ENCODE measurements at regions of chr11 and their contacts with region 1.

Region 1: GRCh38 chr11:113730887-113731726 is 25.0 kb upstream of the TMPRSS5 start:
- DNase-seq: peak; percentile 5 to 49
- ATAC-seq: peak; percentile 72 to 78; a peak in 4 of 6 replicates
- H3K4me3 ChIP-seq: no peak overlapping the region
- H3K27ac ChIP-seq: no peak overlapping the region
- H3K4me1 ChIP-seq: no peaks in the 10 kb centered on the region
- CTCF ChIP-seq: peak; percentile 58
- EP300 ChIP-seq: no peak
- POLR2A ChIP-seq: no peak
- RAD21 ChIP-seq: peak; percentile 70 to 77

Region 2: DNA sequence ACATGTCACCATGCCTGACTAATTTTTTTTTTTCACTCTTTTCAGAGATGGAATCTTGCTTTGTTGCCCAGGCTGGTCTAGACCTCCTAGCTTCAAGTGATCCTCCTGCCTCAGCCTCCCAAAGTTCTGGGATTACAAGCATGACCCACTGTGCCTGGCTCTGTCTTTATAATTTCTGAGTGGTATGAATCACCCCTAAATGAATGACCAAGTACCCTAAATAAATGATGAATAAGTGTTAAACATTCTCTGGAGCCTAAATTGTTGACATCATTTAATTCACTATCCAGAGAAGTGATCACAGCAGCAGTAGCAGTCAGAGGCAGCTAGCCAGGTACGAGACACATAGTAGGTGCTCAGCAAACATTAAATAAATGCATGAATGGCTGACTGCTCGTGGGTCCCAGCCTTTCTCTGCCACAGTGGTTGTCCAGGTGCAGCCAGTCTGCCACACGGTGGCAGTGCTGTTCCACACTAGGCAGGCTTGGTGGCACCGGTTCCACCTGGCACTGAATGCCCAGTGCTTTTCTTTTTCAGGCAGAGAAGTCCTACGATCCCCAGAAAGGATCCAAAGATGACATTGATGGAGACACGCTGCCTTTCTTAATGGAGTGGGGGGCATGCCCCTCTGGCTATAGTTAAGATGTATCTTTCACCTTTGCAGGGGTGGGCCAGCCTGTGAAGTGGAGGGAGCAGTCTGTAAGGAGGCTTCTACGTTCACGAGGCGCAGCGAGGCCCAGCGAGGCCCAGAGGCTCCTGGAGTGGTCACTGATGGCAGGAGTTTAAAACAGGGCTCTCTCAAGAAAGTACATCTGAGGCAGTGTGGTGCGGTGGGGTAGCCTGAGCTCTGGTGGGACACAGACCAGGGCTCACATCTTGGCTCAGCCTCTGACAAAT is 425.4 kb before region 1 on chr11:
- CTCF ChIA-PET with region 1: interaction called, 50 read pairs
- POLR2A ChIA-PET with region 1: no interaction called
- DNase-seq: peak; percentile 42 to 49
- ATAC-seq: peak; percentile 98 to 99
- H3K4me3 ChIP-seq: no peak overlapping the region
- H3K27ac ChIP-seq: no peak overlapping the region
- H3K4me1 ChIP-seq: no peaks in the 10 kb centered on the region
- CTCF ChIP-seq: peak; percentile 83
- EP300 ChIP-seq: no peak
- POLR2A ChIP-seq: no peak
- RAD21 ChIP-seq: peak; percentile 89 to 90

Region 3: DNA sequence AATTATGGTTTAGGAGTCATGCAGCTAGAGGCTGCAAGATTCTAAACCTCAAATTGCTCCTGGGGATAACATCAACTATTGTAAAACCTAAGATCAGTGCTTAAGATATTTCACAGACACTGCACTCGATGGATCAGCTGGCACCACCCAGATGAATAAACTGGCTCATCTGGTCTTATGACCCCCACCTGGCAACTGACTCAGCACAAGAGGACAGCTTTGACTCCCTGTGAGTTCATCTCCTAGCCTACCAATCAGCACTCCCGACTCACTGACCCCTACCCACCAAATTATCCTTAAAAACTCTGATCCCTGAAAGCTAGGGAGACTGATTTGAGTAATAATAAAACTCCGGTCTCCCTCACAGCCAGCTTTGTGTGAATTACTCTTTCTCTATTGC is 417.5 kb before region 1 on chr11:
- CTCF ChIA-PET with region 1: interaction called, 10 read pairs
- POLR2A ChIA-PET with region 1: no interaction called
- DNase-seq: no peak
- ATAC-seq: no peak
- H3K4me3 ChIP-seq: no peak overlapping the region; the same call in 2 of the 3 replicates
- H3K27ac ChIP-seq: no peak overlapping the region
- H3K4me1 ChIP-seq: peaks cover 10% of the 10 kb centered on the region; the same call in 2 of the 3 replicates
- CTCF ChIP-seq: no peak
- EP300 ChIP-seq: no peak
- POLR2A ChIP-seq: no peak
- RAD21 ChIP-seq: no peak

Region 4: DNA sequence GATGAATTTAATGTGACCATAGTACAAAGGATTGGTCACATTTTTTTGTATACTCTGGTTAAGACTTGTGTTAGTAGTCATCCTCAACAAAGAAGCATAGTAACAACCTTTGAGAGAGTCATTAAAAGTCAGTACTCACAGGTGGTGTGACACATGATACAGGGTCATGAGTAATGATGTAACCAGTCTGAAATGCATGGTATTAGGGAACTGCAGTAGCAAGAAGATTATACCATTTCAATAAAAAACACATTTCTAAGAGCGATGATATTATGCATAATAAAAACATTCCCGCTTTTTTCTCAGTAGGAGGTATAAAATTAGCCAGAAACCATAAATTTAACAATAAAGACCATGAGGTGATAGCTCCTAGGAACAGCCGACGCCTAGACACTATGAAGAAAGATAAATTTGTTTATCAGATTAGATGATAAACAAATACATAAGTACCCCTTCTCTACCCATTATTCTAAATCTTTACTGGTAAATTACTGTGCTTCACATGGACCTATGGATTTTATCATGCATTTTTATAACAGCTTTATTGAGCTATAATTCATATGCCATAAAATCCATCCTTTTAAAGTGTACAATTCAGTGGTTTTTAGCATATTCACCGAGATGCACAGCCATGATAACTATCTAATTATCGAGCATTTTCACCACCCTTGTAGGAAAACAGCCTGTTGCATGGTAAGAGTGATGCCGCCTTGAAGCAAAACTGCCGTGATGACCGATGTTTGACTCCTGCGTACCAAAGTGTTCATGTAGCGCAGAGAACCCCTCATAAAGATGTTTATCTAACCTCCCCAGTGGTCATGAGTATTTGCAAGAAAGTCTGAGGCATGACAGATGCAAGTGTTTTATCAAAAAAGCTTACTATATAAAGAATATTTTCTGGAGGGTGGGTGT is 66.8 kb before region 1 on chr11:
- CTCF ChIA-PET with region 1: no interaction called
- POLR2A ChIA-PET with region 1: no interaction called
- DNase-seq: peak; percentile 13 to 29
- ATAC-seq: peak in 1 of 2 experiments; percentile 70; a peak in 1 of 6 replicates
- H3K4me3 ChIP-seq: no peak overlapping the region
- H3K27ac ChIP-seq: no peak overlapping the region
- H3K4me1 ChIP-seq: peaks cover 18% of the 10 kb centered on the region; the same call in 2 of the 3 replicates
- CTCF ChIP-seq: no peak
- EP300 ChIP-seq: no peak
- POLR2A ChIP-seq: no peak
- RAD21 ChIP-seq: no peak

Measured in A549 (cell line).